Posterior cingulate gyrus (tissue), 11 donors: ENCODE measurements at regions of chr22 and their contacts with region 1.

Region 1: GRCh38 chr22:41091132-41092022 is 1.0 kb upstream of the EP300 start:
- DNase-seq: peak; percentile 97 to 100 (median 99)

Region 2: GRCh38 chr22:40636380-40637182 is 454.8 kb before region 1 on chr22 and contains the start of gene MRTFA:
- intact Hi-C with region 1: no loop called
- DNase-seq: peak; percentile 100

Region 3: DNA sequence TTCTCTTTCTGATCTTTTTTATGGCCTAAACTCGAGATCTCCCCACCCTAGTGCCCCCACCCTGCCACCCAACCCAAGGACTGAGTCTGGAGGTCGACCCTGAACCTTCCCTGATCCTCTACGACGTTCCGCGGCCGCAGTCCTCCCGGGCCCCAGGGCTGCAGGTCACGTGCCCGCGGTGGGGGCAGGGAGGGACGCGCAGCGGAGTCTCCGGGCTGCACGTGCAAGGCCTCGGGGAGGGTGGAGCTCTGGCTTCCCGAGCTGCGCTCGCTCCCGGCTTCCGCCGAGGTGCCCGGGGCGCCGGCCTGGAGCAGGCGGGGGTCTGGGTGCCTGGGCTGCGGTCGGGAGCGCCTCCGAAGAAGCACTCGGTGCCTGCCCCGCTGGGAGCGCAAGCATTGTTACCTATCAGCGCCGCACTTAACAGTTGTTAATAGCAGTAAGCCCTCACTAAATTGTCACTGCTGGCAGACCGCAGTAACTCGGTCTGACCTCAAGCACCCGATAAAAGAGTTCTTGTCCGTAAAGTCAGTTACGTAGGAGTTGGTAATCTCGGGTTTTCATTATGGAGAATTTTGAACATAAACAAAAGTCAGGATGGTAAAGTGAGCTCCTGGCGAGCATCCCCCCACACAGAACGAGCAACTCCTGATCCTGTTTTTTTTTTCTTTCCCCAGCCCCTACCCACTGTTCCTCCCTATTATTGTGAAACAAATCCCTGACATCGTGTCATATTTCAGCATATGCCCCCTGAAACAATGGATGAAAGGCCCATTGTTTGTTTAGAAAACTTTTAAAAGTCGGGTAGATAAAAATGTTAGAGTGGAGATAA is 68.7 kb before region 1 on chr22:
- intact Hi-C with region 1: loop called (anchors 2 kb)
- DNase-seq: peak; percentile 60 to 96 (median 75)

Region 4: DNA sequence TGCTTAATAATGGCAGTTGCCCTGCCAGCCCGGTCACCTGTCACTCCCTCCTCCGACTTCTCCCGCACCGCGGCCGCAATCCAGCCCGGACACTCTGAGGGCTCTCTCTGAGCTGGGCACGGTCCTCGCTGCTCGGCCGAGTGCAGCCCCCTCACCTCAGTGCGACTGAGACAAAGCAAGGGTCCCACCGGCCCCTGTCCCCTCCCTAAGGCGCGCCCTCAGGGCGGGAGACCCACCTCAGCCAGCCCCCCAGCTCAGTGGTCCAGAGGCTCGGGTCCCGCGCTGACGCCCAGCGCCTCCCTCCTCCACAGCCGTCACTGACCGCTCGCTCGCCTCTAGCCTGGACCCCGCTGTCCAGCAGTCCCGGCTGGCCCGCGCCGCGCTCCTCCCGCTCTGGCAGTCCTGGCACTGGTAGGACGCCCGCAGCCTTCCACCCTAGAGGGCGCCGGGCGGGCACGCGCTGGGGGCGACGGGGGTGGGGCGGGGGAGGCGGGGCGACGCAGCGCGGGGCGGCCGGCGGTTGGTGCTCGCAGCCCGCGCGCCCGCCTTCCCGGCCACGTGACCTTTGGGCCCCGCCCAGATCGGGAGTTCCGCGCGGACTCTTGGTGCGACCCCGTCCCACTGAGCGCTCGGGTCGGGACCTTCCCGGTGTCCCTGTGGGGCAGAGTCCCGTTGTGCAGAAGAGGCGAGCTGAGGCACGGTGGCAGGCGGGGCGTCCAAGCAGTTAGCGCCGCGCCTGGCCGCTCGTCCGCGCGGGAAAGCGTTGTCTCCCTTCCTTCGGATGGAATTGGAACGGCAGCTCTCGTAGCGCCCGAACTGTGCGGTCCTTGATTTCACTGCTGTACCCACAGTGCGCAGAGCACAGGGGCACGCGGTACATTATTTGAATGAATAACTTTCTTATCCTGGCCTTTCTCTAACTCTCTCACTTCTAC is 105.9 kb after region 1 on chr22:
- intact Hi-C with region 1: loop called (anchors 5 kb)
- DNase-seq: peak; percentile 73 to 98 (median 85)

Region 5: GRCh38 chr22:41285820-41286638 is 194.7 kb after region 1 on chr22 and contains the start of gene RANGAP1:
- intact Hi-C with region 1: loop called (anchors 5 kb)
- DNase-seq: peak; percentile 99 to 100 (median 99)

Region 6: DNA sequence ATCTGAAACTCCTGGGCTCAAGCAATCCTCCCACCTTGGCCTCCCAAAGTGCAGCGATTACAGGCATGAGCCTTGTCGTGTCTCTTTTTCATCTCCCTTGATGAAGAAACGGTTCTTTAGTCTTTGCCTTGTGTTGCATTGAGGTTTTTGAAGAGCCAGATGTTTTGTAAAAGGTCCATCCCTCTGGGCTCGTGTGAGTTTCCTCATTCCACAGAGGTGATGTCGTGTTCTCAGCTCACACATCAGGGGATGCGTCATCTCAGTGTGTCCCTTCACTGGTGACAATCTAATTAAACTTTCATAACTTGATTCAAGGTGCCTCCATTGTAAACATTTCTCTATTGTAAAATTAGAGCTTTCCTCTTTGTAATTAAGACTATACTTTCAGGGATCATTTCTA is 260.7 kb after region 1 on chr22:
- intact Hi-C with region 1: no loop called
- DNase-seq: no peak